Naive thymus-derived CD4-positive, alpha-beta T cell (primary cell): ENCODE measurements at regions of chr5 and their contacts with region 1.

Region 1: DNA sequence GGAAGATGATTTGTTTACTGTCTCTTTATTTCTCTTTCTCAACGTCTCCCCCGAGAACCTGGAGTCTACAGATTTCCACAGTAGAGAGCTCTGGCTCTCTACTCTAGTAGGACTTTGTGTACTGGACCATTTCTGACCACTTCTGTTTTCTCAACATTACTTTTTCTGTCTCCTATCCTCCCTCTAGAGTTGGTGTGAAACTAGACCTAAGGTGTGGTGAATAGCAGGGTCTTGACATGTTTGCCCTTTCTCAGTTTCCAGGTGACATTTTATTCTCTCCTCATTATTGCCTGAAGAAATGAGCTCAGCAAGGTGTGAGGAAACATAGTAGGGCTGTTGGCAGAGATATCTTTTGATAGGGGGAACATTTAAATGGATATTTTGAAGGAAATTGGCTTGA is 62.1 kb upstream of the IL6ST start:
- DNase-seq: no peak
- ATAC-seq: no peak
- H3K4me3 ChIP-seq: peak overlapping the region; percentile 21
- H3K4me3 Mint-ChIP-seq: peak overlapping the region in 8 of 10 donors; percentile 55 to 83 (median 68)
- H3K27ac ChIP-seq: peak overlapping the region; percentile 60
- H3K27ac Mint-ChIP-seq: peak overlapping the region; percentile 44 to 99 (median 90)
- H3K4me1 ChIP-seq: peaks cover 8 to 96% of the 10 kb centered on the region in 2 donors
- H3K4me1 Mint-ChIP-seq: peaks cover 52 to 94% (median 76%) of the 10 kb centered on the region in 7 donors
- H3K27me3 ChIP-seq: no peaks in the 10 kb centered on the region
- H3K27me3 Mint-ChIP-seq: peaks cover 0 to 6% (median 0%) of the 10 kb centered on the region in 5 donors

Region 2: GRCh38 chr5:56070851-56071465 is 14.1 kb after region 1 on chr5:
- CTCF ChIA-PET with region 1: interaction called, 4 read pairs
- POLR2A ChIA-PET with region 1: interaction called, 34 read pairs
- intact Hi-C with region 1: loop called in 1 of 2 experiments (anchors 1 kb)
- DNase-seq: peak in 7 of 9 donors; percentile 46 to 79 (median 69)
- ATAC-seq: peak; percentile 91
- H3K4me3 ChIP-seq: peak overlapping the region; percentile 31
- H3K4me3 Mint-ChIP-seq: peak overlapping the region; percentile 54 to 91 (median 78)
- H3K27ac ChIP-seq: peak overlapping the region; percentile 77
- H3K27ac Mint-ChIP-seq: peak overlapping the region; percentile 65 to 99 (median 91)
- H3K4me1 ChIP-seq: peaks cover 7 to 72% of the 10 kb centered on the region in 2 donors
- H3K4me1 Mint-ChIP-seq: peaks cover 41 to 95% (median 80%) of the 10 kb centered on the region in 7 donors
- H3K27me3 ChIP-seq: no peaks in the 10 kb centered on the region
- H3K27me3 Mint-ChIP-seq: peaks cover 0 to 3% (median 0%) of the 10 kb centered on the region in 5 donors

Region 3: DNA sequence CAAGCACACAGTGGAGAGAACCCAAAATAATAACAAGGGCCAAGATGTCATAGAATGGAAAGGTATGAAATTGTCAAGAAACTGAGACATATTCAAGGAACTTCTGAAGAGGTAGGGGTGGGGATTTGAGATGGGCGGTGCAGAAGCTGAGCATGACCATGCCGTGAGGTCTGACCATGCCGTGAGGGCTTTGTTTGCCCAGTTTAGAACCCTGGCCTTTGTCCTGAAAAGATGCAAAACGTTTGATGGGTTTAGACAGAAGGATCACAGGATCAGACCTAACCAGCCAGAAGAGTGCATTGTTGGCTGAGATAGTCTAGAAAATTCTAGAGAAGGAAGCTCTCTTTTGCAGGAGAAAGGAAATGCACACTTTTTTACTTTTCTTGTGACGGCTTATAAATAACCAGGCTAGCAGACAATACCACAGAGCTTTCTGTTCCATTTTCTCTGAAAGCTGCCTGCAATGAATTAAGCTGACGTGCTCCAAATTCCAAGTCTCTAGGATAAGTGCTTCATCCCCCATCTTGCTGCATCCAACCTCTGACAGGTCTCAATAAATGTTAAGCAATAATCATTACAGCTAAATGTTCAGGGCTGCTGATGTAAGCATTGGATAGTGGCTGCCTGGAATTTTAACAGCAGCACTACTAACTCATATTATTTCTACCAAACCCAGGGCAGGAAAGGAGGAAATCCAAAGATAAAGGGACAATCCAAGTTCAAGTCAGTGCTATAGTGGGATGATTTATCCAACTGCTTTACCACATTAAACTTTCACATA is 48.8 kb after region 1 on chr5:
- CTCF ChIA-PET with region 1: interaction called, 6 read pairs
- POLR2A ChIA-PET with region 1: interaction called, 58 read pairs
- intact Hi-C with region 1: loop called in 1 of 2 experiments (anchors 1 kb)
- DNase-seq: peak in 2 of 9 donors; percentile 24 to 44
- ATAC-seq: no peak
- H3K4me3 ChIP-seq: no peak overlapping the region
- H3K4me3 Mint-ChIP-seq: peak overlapping the region; percentile 49 to 85 (median 70)
- H3K27ac ChIP-seq: peak overlapping the region; percentile 56
- H3K27ac Mint-ChIP-seq: peak overlapping the region; percentile 70 to 100 (median 90)
- H3K4me1 ChIP-seq: peaks cover 0 to 60% of the 10 kb centered on the region in 2 donors
- H3K4me1 Mint-ChIP-seq: peaks cover 33 to 95% (median 73%) of the 10 kb centered on the region in 7 donors
- H3K27me3 ChIP-seq: no peaks in the 10 kb centered on the region
- H3K27me3 Mint-ChIP-seq: no peaks in the 10 kb centered on the region

Region 4: GRCh38 chr5:56129288-56129687 is 72.4 kb after region 1 on chr5:
- CTCF ChIA-PET with region 1: interaction called, 4 read pairs
- POLR2A ChIA-PET with region 1: interaction called, 13 read pairs
- intact Hi-C with region 1: no loop called
- DNase-seq: no peak
- ATAC-seq: no peak
- H3K4me3 ChIP-seq: no peak overlapping the region
- H3K4me3 Mint-ChIP-seq: peak overlapping the region in 8 of 10 donors; percentile 1 to 83 (median 62)
- H3K27ac ChIP-seq: peak overlapping the region; percentile 64
- H3K27ac Mint-ChIP-seq: peak overlapping the region; percentile 88 to 98 (median 96)
- H3K4me1 ChIP-seq: peaks cover 0 to 45% of the 10 kb centered on the region in 2 donors
- H3K4me1 Mint-ChIP-seq: peaks cover 31 to 81% (median 66%) of the 10 kb centered on the region in 7 donors
- H3K27me3 ChIP-seq: no peaks in the 10 kb centered on the region
- H3K27me3 Mint-ChIP-seq: no peaks in the 10 kb centered on the region

Region 5: DNA sequence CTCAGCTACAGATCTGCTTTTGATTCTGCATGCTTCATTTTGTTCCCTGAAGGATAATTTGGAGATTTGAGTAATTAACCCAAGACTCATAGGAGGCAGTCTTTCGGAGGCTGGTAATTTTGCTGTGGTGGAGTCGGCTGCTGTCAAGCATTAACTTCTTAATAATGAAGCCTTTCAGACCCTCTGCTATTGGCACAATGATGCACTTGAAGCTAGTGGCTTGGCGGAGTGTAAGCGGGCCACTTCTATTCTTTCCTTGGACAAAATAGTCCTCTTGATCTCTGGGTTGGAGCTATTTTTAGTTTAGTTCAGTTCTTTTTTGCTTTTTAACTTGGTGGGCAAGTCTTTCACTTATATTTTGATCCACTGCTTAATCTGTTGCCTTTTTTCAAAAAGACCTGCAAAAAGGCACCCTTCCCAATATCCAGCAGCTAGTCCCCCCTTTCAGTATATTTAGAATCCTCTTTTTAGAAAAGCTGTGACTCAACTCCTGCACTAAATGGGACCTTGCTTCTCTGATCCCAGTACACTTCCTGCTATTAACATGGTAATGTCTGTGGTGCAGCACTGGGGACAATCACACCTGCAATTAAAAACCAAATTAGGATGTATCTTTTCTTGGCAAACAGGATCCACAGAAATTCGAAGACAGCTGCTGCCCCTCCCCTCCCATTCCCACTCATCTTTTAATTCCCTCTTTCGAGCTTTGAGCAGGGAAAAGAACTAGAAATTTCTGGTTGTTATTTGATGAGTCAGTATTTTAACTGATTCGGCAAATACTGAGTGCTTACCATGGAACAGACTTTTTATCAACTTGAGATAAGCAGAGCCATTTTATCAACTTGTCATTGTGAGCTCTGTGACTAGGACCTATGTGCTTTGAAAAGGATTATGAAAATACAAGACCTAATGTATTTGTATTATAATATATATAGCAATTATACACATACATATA is 345.7 kb after region 1 on chr5:
- CTCF ChIA-PET with region 1: no interaction called
- POLR2A ChIA-PET with region 1: no interaction called
- intact Hi-C with region 1: no loop called
- DNase-seq: no peak
- ATAC-seq: no peak
- H3K4me3 ChIP-seq: no peak overlapping the region
- H3K4me3 Mint-ChIP-seq: no peak overlapping the region
- H3K27ac ChIP-seq: no peak overlapping the region
- H3K27ac Mint-ChIP-seq: no peak overlapping the region
- H3K4me1 ChIP-seq: no peaks in the 10 kb centered on the region
- H3K4me1 Mint-ChIP-seq: no peaks in the 10 kb centered on the region
- H3K27me3 ChIP-seq: no peaks in the 10 kb centered on the region
- H3K27me3 Mint-ChIP-seq: no peaks in the 10 kb centered on the region

Region 6: GRCh38 chr5:57054671-57055070 is 997.8 kb after region 1 on chr5:
- CTCF ChIA-PET with region 1: no interaction called
- POLR2A ChIA-PET with region 1: no interaction called
- intact Hi-C with region 1: no loop called
- DNase-seq: no peak
- ATAC-seq: no peak
- H3K4me3 ChIP-seq: no peak overlapping the region
- H3K4me3 Mint-ChIP-seq: no peak overlapping the region
- H3K27ac ChIP-seq: no peak overlapping the region
- H3K27ac Mint-ChIP-seq: no peak overlapping the region
- H3K4me1 ChIP-seq: no peaks in the 10 kb centered on the region
- H3K4me1 Mint-ChIP-seq: peaks cover 0 to 2% (median 0%) of the 10 kb centered on the region in 7 donors
- H3K27me3 ChIP-seq: no peaks in the 10 kb centered on the region
- H3K27me3 Mint-ChIP-seq: peaks cover 0 to 22% (median 0%) of the 10 kb centered on the region in 5 donors